ENCODE measurements at regions of chr4 and their contacts with region 1.

Region 1: GRCh38 chr4:74675673-74676279 is 118.5 kb downstream of the BTC start:
- DNase-seq: peak; percentile 80
- H3K4me3 Mint-ChIP-seq: peak overlapping the region; percentile 19
- H3K27ac Mint-ChIP-seq: no peak overlapping the region
- H3K4me1 Mint-ChIP-seq: peaks cover 9% of the 10 kb centered on the region
- H3K27me3 Mint-ChIP-seq: no peaks in the 10 kb centered on the region
- CTCF ChIP-seq: peak; percentile 80

Region 2: GRCh38 chr4:74228691-74229640 is 446.8 kb before region 1 on chr4:
- CTCF ChIA-PET with region 1: interaction called, 3 read pairs
- POLR2A ChIA-PET with region 1: interaction called, 6 read pairs
- intact Hi-C with region 1: loop called (anchors 10 kb)
- DNase-seq: peak; percentile 86
- H3K4me3 Mint-ChIP-seq: no peak overlapping the region
- H3K27ac Mint-ChIP-seq: no peak overlapping the region
- H3K4me1 Mint-ChIP-seq: peaks cover 28% of the 10 kb centered on the region
- H3K27me3 Mint-ChIP-seq: no peaks in the 10 kb centered on the region
- CTCF ChIP-seq: peak; percentile 81

Region 3: DNA sequence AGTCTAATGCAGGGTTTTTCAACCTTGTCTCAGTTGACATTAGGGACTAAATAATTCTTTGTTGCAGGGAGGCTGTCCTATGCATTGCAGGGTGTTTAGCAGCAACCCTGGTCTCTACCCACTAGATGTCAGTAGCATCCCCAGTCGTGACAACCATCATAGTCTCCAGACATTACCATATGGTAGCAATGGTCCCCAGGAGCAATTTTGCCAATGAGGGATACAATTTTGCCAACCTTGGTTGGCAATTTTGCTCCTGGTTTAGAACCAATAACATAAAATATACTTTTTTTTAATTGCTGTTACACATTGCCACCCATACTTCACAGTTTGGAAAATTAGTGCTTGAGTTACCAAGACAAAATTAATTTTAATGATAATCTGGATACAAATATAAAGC is 304.9 kb before region 1 on chr4:
- CTCF ChIA-PET with region 1: interaction called, 22 read pairs
- POLR2A ChIA-PET with region 1: no interaction called
- intact Hi-C with region 1: loop called (anchors 1 kb)
- DNase-seq: peak; percentile 84
- H3K4me3 Mint-ChIP-seq: no peak overlapping the region
- H3K27ac Mint-ChIP-seq: no peak overlapping the region
- H3K4me1 Mint-ChIP-seq: peaks cover 35% of the 10 kb centered on the region
- H3K27me3 Mint-ChIP-seq: no peaks in the 10 kb centered on the region
- CTCF ChIP-seq: peak; percentile 83

Region 4: DNA sequence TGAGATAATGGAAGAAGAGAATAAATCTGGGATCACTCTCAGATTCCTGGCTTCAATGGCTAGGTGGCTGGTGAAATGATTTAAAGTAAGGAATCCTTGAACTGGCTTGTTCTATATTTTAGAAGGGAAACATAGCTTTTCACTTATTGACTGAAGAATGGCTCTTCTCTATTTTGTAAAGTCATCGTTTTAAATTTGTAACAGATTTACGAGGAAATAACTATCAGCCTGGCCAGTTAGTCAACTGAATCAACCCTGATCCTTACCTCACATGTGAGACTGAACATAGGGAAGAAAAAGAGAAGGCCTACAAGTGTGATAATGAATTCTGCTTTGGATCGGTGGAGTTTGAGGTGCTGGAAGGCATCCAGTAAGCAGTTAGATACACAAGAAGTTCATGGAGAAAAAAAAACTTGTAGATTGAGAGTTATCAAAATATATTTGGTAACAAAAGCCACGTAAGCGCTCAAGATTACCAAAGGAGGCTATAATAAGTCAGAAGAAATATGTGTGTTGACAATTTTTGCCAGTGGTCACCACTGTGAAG is 218.9 kb before region 1 on chr4:
- CTCF ChIA-PET with region 1: interaction called, 6 read pairs
- POLR2A ChIA-PET with region 1: interaction called, 5 read pairs
- intact Hi-C with region 1: loop called (anchors 1 kb)
- DNase-seq: peak; percentile 55
- H3K4me3 Mint-ChIP-seq: no peak overlapping the region
- H3K27ac Mint-ChIP-seq: peak overlapping the region; percentile 58
- H3K4me1 Mint-ChIP-seq: peaks cover 34% of the 10 kb centered on the region
- H3K27me3 Mint-ChIP-seq: no peaks in the 10 kb centered on the region
- CTCF ChIP-seq: no peak

Region 5: GRCh38 chr4:74623041-74623440 is 52.7 kb before region 1 on chr4:
- CTCF ChIA-PET with region 1: interaction called, 14 read pairs
- POLR2A ChIA-PET with region 1: interaction called, 5 read pairs
- intact Hi-C with region 1: loop called (anchors 1 kb)
- DNase-seq: peak; percentile 74
- H3K4me3 Mint-ChIP-seq: no peak overlapping the region
- H3K27ac Mint-ChIP-seq: no peak overlapping the region
- H3K4me1 Mint-ChIP-seq: peaks cover 52% of the 10 kb centered on the region
- H3K27me3 Mint-ChIP-seq: no peaks in the 10 kb centered on the region
- CTCF ChIP-seq: peak; percentile 47